ENCODE measurements at regions of chr19 and their contacts with region 1.

Region 1: DNA sequence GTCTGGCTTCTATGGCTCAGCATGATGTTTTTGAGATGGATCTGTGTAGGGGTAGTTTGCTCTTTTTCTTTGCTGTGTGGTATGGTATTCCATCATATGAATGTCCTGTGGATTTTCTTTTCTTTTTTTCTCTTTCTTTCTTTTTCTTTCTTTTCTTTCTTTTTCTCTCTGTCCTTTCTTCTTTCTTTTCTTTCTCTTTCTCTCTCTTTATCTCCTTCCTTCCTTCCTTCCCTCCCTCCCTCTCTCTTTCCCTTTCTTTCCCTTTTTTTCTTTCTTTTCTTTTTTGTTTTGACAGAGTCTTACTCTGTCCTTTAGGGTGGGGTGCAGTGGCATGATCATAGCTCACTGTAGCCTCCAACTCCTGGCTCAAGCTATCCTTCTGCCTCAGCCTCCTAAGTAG is 9.0 kb upstream of the HNRNPUL1 start:
- DNase-seq: no peak
- H3K4me3 ChIP-seq: no peak overlapping the region
- H3K27ac ChIP-seq: no peak overlapping the region
- H3K4me1 ChIP-seq: no peaks in the 10 kb centered on the region
- H3K27me3 ChIP-seq: no peaks in the 10 kb centered on the region
- CTCF ChIP-seq: no peak
- EP300 ChIP-seq: no peak
- POLR2A ChIP-seq: no peak

Region 2: DNA sequence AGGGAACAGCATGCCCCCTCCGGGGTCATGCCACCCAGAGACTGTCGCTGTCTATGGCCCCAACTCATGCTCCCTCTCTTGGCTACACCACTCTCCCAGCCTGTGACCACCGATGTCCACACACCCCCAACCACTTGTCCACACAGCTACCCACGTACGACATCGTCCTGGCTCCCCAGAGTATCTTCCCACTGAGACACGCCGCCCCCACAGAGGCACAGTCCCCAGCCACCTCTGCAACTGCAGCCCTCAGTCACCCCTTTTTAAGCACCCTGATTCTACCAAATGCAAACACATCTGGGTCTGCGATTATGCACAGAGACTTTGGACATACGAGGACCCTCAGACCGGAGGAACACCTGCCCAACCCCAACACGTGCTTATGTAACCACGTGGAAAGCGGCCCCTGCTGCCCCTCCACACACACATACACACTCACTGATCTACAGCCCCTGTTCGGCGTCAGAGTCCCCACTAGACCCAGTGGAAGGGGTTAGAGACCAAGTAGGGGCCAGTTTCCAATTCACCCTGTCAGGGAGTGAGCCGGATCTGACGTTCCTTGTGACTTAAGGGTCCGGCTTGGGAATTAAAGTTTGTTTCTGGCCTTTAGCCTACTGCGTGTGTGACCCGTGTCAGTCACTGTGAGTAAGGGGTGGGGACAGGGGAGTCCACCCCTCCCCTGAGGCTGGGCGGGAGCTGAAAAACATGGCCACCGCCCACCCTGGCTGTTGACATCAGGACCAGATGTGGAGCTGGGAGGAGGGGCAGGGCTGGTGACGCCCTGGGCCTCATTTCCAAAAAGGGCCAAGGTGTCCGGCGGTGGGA is 48.0 kb before region 1 on chr19:
- intact Hi-C with region 1: loop called (anchors 5 kb)
- DNase-seq: peak; percentile 34 to 79
- H3K4me3 ChIP-seq: peak overlapping the region in 1 of 4 donors; percentile 9
- H3K27ac ChIP-seq: peak overlapping the region; percentile 24 to 58 (median 44)
- H3K4me1 ChIP-seq: peaks cover 0 to 21% (median 4%) of the 10 kb centered on the region in 4 donors
- H3K27me3 ChIP-seq: no peaks in the 10 kb centered on the region
- CTCF ChIP-seq: no peak
- EP300 ChIP-seq: no peak
- POLR2A ChIP-seq: no peak

Region 3: DNA sequence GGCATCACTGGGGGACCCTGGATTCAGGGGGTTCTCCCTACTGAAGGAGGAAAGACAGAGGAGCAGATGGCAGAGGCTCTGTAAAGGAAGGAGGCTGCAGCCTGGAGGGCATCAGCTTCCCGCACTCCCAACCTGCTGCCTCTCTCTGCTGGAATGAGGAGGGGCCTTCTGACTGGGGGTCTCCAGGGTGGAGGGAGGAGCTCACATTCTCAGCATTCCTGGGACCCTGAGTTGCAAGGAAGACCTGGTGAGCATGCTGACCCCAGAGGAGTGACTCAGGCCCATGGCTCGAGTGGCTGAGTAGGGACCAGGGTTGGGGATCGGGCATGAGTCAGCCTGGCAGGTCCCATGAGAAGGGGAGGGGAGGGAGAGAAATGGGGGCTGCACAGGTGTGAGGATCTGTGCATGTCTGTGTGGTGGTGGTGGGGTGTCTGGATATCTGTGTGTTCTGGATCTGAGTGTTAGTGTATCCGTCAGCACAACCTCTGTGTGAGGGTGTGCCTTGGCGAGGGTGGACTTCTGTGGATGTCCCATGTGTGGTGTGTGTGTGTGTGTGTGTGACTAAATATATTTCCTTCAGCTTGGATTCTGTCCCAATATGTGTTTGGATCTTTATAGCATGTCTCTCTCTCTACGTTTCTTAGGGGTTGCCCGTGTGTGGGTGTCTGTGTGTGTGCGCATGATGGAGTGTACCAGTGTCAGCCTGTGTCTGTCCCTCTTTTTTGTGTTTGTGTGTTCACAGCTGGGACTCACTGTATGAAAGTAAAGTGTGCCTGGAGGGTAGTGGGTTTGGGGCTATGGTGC is 31.5 kb before region 1 on chr19:
- intact Hi-C with region 1: loop called (anchors 5 kb)
- DNase-seq: no peak
- H3K4me3 ChIP-seq: no peak overlapping the region
- H3K27ac ChIP-seq: peak overlapping the region; percentile 8 to 94 (median 90)
- H3K4me1 ChIP-seq: peaks cover 20 to 72% (median 46%) of the 10 kb centered on the region in 4 donors
- H3K27me3 ChIP-seq: peaks cover 0 to 30% (median 30%) of the 10 kb centered on the region in 3 donors
- CTCF ChIP-seq: no peak
- EP300 ChIP-seq: no peak
- POLR2A ChIP-seq: no peak

Region 4: DNA sequence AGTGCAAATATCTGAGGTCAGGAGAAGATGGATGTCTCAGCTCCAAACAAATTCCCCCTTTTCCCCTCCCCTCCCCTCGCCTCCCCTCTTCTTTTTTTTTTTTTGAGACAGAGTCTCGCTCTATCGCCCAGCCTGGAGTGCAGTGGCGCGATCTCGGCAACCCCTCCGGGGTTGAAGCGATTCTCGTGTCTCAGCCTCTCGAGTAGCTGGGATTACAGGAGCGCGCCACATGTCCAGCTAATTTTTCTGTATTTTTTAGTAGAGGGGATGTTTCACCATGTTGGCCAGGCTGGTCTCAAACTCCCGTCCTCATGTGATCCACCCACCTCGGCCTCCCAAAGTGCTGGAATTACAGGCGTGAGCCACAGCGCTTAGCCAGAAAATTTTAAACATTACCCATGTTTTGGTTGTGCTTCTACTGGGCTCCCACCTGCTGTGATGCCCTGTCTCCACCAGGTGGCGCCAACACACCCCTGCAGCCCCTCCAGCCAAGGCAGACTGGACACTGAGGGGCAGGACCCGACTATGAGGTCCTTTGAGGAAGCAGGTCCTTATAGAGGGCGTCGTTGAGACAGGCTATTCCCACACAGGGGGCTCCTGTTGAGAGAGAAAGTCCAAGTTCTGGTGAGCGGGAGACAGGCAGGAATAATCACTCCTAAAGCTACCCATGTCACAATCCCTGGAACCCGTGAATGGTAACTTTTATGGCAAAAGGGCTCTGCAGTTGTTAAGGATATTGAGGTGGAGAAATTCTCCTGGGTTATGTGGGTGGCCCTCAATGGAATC is 194.1 kb after region 1 on chr19:
- intact Hi-C with region 1: no loop called
- DNase-seq: peak; percentile 77 to 89
- H3K4me3 ChIP-seq: peak overlapping the region in 3 of 4 donors; percentile 19 to 30 (median 22)
- H3K27ac ChIP-seq: no peak overlapping the region
- H3K4me1 ChIP-seq: peaks cover 0 to 10% (median 10%) of the 10 kb centered on the region in 4 donors
- H3K27me3 ChIP-seq: peaks cover 0 to 33% (median 4%) of the 10 kb centered on the region in 3 donors
- CTCF ChIP-seq: peak in 5 of 7 experiments; percentile 89 to 97 (median 95)
- EP300 ChIP-seq: no peak
- POLR2A ChIP-seq: no peak

Measured in stomach (tissue), 19 donors.